ENCODE measurements at regions of chr1 and their contacts with region 1.

Region 1: DNA sequence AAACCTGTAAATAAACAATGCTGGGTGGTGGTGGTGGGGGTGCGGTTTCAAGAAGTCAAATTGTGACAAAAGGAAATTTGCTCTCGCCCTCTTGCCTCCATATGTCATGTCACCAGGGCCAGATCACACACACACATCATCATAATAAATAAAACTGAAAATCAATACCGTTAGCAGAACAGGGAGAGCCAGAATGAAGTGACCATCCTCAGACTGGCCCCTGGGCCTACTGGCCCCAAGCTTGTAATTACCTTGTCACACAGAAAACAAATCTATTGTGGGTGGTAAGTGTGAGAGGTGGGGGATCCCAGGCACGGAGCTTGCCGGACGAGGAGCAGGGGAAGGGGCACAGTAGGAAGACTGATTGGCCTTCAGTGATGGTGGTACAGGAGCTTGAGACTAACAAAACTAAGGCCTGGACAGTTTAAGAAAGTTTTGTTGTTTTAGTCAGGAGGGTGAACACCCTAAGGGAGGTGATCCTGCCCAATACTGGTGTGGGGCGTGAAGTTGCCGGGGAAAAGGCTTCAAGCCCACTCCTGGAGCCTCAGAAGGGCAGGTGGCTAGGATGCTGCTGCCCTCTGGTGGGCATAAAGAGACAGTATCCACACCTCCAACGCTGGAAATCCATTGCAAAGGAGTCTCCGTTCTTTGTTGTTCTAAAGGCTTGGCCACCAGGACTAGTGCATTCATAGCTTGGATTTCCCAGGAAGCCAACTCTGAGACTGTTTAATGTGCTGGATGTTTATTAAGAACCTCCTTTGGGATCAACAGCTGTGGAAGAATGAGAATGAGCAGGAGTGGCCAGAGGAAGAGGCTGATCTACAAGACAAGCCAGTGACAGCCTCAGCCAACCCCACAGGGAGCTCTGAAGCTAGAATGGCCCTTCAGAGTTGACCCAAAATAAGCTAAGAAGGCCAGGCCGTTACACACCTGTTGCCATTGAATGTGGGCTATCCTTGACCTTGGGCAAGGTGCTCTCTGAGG is 8.1 kb upstream of the C1orf216 start:
- DNase-seq: peak; percentile 65
- ATAC-seq: peak; percentile 89
- H3K4me3 Mint-ChIP-seq: no peak overlapping the region
- H3K27ac Mint-ChIP-seq: no peak overlapping the region
- H3K4me1 Mint-ChIP-seq: no peaks in the 10 kb centered on the region
- H3K27me3 Mint-ChIP-seq: no peaks in the 10 kb centered on the region

Region 2: DNA sequence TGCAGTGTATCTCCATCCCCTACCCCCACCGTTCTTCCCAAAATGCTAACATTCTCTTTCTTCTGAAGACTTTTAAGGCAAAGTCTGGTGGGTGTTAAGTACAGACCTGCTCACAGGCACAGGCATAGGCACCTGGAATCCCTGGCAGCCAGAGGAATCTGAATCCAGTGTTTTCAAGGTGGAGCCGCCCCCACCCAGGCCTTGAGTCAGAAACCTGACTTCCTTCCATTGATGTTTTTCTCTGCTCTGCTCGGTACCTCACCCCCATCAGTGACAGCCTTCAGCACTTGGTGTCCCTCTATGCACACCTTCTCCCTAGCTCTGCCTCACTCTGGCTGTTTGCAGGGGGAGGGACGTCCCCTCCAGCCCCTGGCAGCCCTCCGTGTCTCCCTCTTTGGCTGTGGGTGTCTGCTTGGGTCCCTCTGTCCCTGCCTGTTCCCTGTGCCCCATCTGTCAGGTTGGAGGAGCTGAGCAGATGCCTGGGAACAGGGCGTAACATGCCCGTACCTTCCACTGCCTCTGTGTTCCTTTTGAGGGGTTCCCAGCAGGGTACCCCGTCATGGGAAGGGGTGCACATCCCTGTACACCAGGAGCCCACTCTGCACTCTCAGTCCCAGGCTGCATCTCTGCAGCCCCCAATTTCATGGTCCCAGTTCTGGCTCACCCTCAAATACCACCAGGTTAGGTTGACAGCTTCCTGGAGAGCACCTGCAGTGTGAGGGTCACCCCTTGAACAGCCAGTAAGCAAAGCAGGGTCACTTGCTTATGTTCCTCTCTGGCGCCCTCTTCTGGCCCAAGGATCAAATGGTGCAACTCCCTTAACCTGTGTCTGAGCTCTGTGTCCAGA is 162.5 kb before region 1 on chr1:
- CTCF ChIA-PET with region 1: interaction called, 43 read pairs
- POLR2A ChIA-PET with region 1: no interaction called
- intact Hi-C with region 1: loop called (anchors 1 kb)
- DNase-seq: peak; percentile 91
- ATAC-seq: peak; percentile 87
- H3K4me3 Mint-ChIP-seq: no peak overlapping the region
- H3K27ac Mint-ChIP-seq: no peak overlapping the region
- H3K4me1 Mint-ChIP-seq: peaks cover 28% of the 10 kb centered on the region
- H3K27me3 Mint-ChIP-seq: no peaks in the 10 kb centered on the region

Region 3: GRCh38 chr1:35577071-35577998 is 149.4 kb before region 1 on chr1:
- CTCF ChIA-PET with region 1: interaction called, 11 read pairs
- POLR2A ChIA-PET with region 1: no interaction called
- intact Hi-C with region 1: no loop called
- DNase-seq: peak; percentile 74
- ATAC-seq: peak; percentile 83
- H3K4me3 Mint-ChIP-seq: peak overlapping the region; percentile 63
- H3K27ac Mint-ChIP-seq: peak overlapping the region; percentile 80
- H3K4me1 Mint-ChIP-seq: peaks cover 20% of the 10 kb centered on the region
- H3K27me3 Mint-ChIP-seq: peaks cover 12% of the 10 kb centered on the region

Region 4: DNA sequence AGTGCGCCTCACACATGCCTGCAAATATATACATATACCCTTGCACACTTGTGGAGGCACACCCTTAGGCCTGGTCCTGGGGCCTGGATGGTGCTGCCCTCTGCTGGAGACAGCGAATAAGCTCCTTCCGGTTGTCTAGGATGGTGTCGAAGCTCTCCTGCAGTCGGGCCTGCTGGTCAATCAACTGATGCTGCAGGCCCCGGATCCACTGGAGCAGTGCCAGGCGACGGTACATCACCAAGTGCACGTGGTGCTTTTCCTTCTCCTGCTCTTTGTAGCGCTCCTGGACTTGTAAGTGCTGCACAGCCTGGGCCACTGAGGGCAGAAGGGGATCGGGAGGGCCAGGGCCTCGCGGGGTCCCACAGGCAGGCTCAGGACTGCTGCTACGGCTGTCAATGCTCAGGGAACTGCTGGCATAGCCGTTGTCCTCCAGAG is 11.2 kb before region 1 on chr1:
- CTCF ChIA-PET with region 1: interaction called, 46 read pairs
- POLR2A ChIA-PET with region 1: no interaction called
- intact Hi-C with region 1: no loop called
- DNase-seq: peak; percentile 90
- ATAC-seq: peak; percentile 61
- H3K4me3 Mint-ChIP-seq: peak overlapping the region; percentile 37
- H3K27ac Mint-ChIP-seq: no peak overlapping the region
- H3K4me1 Mint-ChIP-seq: peaks cover 31% of the 10 kb centered on the region
- H3K27me3 Mint-ChIP-seq: no peaks in the 10 kb centered on the region

Region 5: DNA sequence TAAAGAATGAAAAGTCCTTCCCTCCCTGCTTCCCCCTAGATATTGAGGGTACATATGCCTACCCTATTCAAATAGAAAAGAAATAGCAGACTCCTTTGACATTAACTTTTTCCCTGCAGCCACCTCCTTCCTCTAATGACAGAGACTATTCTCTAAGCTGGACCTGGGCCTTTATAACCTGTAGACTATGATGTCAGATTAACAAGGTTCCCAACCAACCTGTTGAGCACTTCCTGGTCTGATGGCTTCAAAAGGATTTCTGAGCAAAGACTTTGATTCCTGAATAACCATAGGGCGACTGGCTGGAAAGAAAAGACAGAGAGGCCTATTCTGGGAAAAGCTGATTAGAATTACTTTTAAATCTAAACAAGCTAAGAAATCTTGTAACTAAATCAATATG is 10.4 kb after region 1 on chr1:
- CTCF ChIA-PET with region 1: interaction called, 11 read pairs
- POLR2A ChIA-PET with region 1: no interaction called
- intact Hi-C with region 1: no loop called
- DNase-seq: no peak
- ATAC-seq: no peak
- H3K4me3 Mint-ChIP-seq: no peak overlapping the region
- H3K27ac Mint-ChIP-seq: no peak overlapping the region
- H3K4me1 Mint-ChIP-seq: no peaks in the 10 kb centered on the region
- H3K27me3 Mint-ChIP-seq: no peaks in the 10 kb centered on the region

Region 6: DNA sequence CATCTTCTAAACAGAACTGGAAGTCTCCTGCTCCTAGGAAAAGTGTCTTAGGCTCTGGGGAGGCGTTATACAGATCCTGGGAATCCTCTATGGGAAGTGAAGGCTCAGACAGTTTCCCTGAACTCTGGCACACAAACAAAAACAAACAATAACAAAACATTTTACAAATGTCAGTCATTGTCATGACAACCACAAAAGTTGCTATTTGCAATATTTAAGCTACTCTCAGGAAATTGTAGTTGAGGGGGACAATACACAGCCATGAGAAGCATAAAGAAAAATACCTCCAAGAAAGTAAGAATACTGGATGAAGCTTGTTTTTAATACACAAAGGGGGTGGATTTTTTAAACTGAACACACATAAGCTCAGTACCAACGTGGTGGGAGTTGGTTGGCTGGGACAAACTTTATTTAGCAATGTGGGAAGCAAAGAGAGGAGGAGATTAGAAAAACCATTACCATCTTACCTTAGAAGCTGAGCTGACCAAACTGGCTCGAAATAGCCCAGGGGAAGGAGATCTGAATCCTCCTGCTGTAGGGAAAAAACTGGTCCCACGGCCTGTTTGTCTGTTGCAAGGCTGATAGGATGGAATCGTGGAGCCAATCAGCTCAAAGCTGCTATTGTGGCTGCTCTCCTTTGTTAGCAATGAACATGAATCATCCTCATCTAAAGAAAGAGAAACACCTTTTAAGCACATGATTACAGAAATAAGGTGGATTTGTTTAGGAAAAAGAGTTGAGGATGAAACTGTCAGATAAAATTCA is 21.4 kb after region 1 on chr1:
- CTCF ChIA-PET with region 1: interaction called, 18 read pairs
- POLR2A ChIA-PET with region 1: no interaction called
- intact Hi-C with region 1: no loop called
- DNase-seq: no peak
- ATAC-seq: no peak
- H3K4me3 Mint-ChIP-seq: no peak overlapping the region
- H3K27ac Mint-ChIP-seq: no peak overlapping the region
- H3K4me1 Mint-ChIP-seq: no peaks in the 10 kb centered on the region
- H3K27me3 Mint-ChIP-seq: no peaks in the 10 kb centered on the region

Region 7: GRCh38 chr1:35777109-35777508 is 50.4 kb after region 1 on chr1:
- CTCF ChIA-PET with region 1: interaction called, 3 read pairs
- POLR2A ChIA-PET with region 1: interaction called, 3 read pairs
- intact Hi-C with region 1: loop called in 1 of 2 experiments (anchors 2 kb)
- DNase-seq: no peak
- ATAC-seq: no peak
- H3K4me3 Mint-ChIP-seq: no peak overlapping the region
- H3K27ac Mint-ChIP-seq: no peak overlapping the region
- H3K4me1 Mint-ChIP-seq: no peaks in the 10 kb centered on the region
- H3K27me3 Mint-ChIP-seq: no peaks in the 10 kb centered on the region